ENCODE measurements at regions of chr1 and their contacts with region 1.

Region 1: DNA sequence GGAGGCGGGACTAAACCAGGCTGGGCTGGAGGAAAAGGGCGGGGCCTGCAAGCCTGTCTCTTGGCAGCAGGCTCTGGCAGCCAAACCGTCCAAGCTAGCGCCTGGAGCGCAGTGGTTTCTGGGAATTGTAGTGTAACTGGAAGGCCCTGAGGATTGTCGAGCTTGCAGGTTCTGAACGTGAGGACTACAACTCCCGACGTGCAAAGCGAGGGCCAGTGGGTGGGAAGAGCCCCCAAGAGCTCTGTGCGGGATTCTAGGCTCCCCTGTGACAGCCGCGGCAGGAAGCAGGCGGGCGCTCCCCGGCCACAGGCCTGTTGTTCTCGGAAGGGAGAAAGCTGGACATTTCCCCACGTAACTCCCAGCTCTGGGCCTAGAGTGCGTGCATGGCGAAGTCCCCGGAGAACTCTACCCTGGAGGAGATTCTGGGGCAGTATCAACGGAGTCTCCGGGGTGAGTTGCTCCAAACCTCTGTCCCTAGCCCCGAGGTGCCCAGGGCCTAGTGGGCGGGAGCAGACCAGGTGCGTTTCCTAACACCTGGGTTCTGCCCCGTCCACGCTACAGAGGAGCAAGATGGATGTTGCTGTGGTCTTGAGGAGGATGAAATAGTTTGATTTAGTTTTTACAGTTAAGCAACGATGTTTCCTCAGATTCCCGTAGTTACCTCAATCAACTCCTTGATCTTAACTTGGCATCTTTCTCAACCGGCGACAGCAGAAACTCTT is at the start of gene SDCCAG8:
- DNase-seq: peak; percentile 97 to 100 (median 98)

Region 2: GRCh38 chr1:243316366-243316989 is 60.5 kb after region 1 on chr1:
- intact Hi-C with region 1: loop called (anchors 2 kb)
- DNase-seq: peak; percentile 62 to 97 (median 78)